IMR-90 (cell line): ENCODE measurements at regions of chr2 and their contacts with region 1.

Region 1: DNA sequence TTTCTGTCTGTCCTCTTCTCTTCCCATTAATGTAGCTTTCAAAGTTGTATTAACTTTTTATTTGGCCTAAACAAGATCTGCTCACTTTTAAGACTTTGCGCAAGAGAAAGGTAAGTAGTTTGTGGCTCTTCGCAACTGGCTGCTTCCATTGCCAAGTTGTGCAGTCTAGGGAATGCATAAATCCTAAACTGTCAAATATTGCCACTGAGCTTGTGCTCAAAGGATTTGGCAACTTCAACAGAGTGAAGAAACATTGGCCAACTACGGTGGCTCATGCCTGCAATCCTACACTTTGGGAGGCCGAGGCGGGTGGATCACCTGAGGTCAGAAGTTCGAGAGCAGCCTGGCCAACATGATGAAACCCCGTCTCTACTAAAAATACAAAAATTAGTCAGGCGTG is 826.4 kb downstream of the EPHA4 start:
- DNase-seq: no peak
- ATAC-seq: no peak
- H3K4me3 ChIP-seq: no peak overlapping the region
- H3K27ac ChIP-seq: no peak overlapping the region
- H3K4me1 ChIP-seq: peaks cover 8% of the 10 kb centered on the region; the same call in 1 of the 2 replicates
- H3K27me3 ChIP-seq: no peaks in the 10 kb centered on the region
- CTCF ChIP-seq: no peak
- POLR2A ChIP-seq: no peak
- RAD21 ChIP-seq: no peak

Region 2: GRCh38 chr2:220717283-220717682 is 28.4 kb before region 1 on chr2:
- CTCF ChIA-PET with region 1: no interaction called
- POLR2A ChIA-PET with region 1: interaction called, 11 read pairs
- dilution Hi-C with region 1: no loop called
- in situ Hi-C with region 1: no loop called
- intact Hi-C with region 1: no loop called
- DNase-seq: no peak
- ATAC-seq: no peak
- H3K4me3 ChIP-seq: no peak overlapping the region
- H3K27ac ChIP-seq: no peak overlapping the region
- H3K4me1 ChIP-seq: no peaks in the 10 kb centered on the region
- H3K27me3 ChIP-seq: no peaks in the 10 kb centered on the region
- CTCF ChIP-seq: no peak
- POLR2A ChIP-seq: no peak
- RAD21 ChIP-seq: no peak